ENCODE measurements at regions of chr3 and their contacts with region 1.

Region 1: GRCh38 chr3:40452876-40453730 is 4.0 kb upstream of the RPL14 start:
- DNase-seq: peak; percentile 97 to 99
- ATAC-seq: peak; percentile 94 to 97 (median 96)
- H3K4me3 ChIP-seq: peak overlapping the region; percentile 77
- H3K27ac ChIP-seq: peak overlapping the region; percentile 94
- H3K4me1 ChIP-seq: peaks cover 24% of the 10 kb centered on the region
- H3K27me3 ChIP-seq: no peaks in the 10 kb centered on the region
- CTCF ChIP-seq: no peak

Region 2: GRCh38 chr3:40073310-40074007 is 379.6 kb before region 1 on chr3:
- intact Hi-C with region 1: no loop called
- DNase-seq: no peak
- ATAC-seq: no peak
- H3K4me3 ChIP-seq: no peak overlapping the region
- H3K27ac ChIP-seq: no peak overlapping the region
- H3K4me1 ChIP-seq: no peaks in the 10 kb centered on the region
- H3K27me3 ChIP-seq: no peaks in the 10 kb centered on the region
- CTCF ChIP-seq: no peak

Region 3: GRCh38 chr3:40309418-40309924 is 143.6 kb before region 1 on chr3 and contains the start of gene EIF1B:
- intact Hi-C with region 1: loop called in 1 of 2 experiments (anchors 5 kb)
- DNase-seq: peak; percentile 98 to 99
- ATAC-seq: peak; percentile 96 to 98 (median 98)
- H3K4me3 ChIP-seq: peak within 1 kb of the TSS; percentile 85
- H3K27ac ChIP-seq: peak within 1 kb of the TSS; percentile 96
- H3K4me1 ChIP-seq: peaks cover 42% of the 10 kb centered on the region
- H3K27me3 ChIP-seq: no peaks in the 10 kb centered on the region
- CTCF ChIP-seq: peak; percentile 90
- total RNA-seq, gene EIF1B: 60.1 to 75.8 (median 66.8) TPM

Region 4: DNA sequence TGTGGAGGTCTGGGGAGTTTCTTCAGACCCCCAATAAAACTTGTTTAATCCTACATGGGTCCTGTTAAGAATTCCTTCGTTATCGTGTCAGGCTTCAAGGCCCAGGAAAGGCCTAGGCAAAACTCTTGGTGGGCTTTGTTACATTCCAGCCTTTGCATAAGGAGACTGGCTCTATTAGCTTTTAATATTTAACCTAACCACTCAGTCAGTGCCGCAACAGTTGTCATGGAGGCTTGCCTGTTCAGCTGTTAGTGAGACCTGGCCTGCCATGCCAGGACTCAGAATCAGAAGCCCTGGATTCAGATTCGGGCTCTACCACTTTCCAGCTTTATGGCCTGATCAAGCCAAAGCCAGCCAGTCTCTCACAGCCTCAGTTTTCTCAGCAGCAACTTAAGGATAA is 124.0 kb before region 1 on chr3:
- intact Hi-C with region 1: loop called (anchors 5 kb)
- DNase-seq: no peak
- ATAC-seq: no peak
- H3K4me3 ChIP-seq: no peak overlapping the region
- H3K27ac ChIP-seq: no peak overlapping the region
- H3K4me1 ChIP-seq: no peaks in the 10 kb centered on the region
- H3K27me3 ChIP-seq: no peaks in the 10 kb centered on the region
- CTCF ChIP-seq: no peak

Region 5: DNA sequence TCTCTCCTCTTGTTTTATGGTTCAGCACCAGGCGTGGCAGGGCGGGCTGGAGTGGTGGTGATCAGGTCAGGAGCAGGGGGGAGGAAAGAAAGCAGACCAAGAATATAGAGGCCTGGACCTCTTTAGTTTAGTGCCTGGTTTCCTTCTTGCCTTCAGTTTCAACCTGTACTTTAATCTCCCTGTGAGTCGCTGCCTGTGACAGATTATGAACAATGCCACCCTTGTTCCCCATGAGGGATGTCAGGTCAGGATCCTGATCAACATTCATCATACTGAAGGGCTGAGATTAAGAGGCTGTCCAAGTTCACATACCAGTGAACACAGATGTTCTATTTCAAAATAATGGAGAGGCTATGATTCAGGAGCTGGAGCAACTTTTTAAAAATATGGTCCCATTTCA is 54.8 kb before region 1 on chr3:
- intact Hi-C with region 1: no loop called
- DNase-seq: no peak
- ATAC-seq: no peak
- H3K4me3 ChIP-seq: no peak overlapping the region
- H3K27ac ChIP-seq: no peak overlapping the region
- H3K4me1 ChIP-seq: no peaks in the 10 kb centered on the region
- H3K27me3 ChIP-seq: no peaks in the 10 kb centered on the region
- CTCF ChIP-seq: no peak

Region 6: DNA sequence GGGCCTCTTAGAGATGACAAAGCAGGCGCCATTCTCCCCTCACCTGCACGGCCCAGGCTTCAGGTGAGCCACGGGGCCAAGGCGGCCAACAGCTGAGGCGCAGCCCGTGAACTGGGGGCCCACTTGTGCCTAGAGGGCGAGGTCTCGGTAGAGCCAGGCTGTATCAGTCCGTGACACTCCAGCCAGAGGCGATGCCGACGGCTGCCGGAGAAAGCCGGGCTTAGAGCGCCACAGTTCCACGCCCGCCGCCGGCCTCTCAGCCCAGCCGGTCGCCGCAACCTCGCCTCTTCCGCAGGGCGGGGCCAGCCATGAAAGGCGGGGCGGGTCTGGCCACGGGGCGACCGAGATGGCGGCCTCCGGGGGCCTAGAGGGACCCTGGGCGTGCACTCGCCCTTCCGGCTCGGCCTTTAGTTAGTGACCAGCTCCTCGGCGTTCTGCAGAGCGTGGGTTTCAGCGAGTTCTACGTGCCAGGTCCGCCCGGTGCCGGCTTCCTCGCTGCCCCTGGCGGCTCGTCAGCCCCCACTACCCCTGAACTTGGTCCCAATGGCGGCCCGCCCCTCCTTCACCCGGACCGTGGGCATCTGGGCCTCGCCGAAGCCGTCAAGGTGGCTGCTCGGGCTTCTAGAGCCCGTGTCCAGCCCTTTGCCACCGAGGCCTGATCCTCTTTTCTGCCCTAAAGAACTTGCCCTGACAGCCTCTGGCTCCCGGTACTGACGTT is 71.6 kb after region 1 on chr3 and contains the start of gene ZNF621:
- intact Hi-C with region 1: loop called (anchors 1 to 5 kb)
- DNase-seq: peak; percentile 93 to 96
- ATAC-seq: peak; percentile 99 to 100 (median 100)
- H3K4me3 ChIP-seq: peak within 1 kb of the TSS; percentile 91
- H3K27ac ChIP-seq: peak within 1 kb of the TSS; percentile 92
- H3K4me1 ChIP-seq: peaks cover 3% of the 10 kb centered on the region
- H3K27me3 ChIP-seq: no peaks in the 10 kb centered on the region
- CTCF ChIP-seq: no peak
- total RNA-seq, gene ZNF621: 8.8 to 9.8 (median 9.1) TPM

Region 7: DNA sequence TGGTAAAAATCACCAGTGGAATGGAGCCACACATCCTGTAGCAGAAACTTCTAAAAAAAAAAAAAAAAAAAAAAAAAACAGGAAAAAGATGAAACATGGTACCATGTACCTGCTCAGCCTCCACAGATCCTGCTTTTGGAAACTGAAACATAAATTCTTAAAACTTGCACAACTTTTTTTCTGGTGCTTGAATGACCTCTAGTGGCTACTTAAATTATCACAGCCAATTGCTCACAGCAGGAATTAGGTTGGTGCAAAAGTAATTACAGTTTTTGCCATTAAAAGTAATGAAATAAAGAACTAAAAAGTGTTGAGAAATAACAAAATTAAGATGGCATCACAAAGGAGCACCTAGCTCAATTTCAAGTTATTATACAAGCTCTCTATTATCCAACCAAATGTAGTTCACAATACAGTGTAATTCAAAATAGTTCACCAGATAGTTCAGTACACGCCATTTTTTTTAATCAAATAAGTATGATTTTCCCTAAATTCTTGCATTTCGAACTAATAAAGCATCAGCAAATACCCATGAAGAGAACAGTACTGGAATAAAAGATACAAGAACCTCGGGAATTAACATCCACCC is 1428.2 kb after region 1 on chr3:
- intact Hi-C with region 1: loop called in 1 of 2 experiments (anchors 10 kb)
- DNase-seq: no peak
- ATAC-seq: peak in 1 of 4 donors; percentile 60
- H3K4me3 ChIP-seq: no peak overlapping the region
- H3K27ac ChIP-seq: no peak overlapping the region
- H3K4me1 ChIP-seq: no peaks in the 10 kb centered on the region
- H3K27me3 ChIP-seq: no peaks in the 10 kb centered on the region
- CTCF ChIP-seq: peak; percentile 75

Measured in psoas muscle (tissue), 8 donors.